ENCODE measurements at regions of chr9 and their contacts with region 1.

Region 1: GRCh38 chr9:104386425-104387069 is 117.5 kb upstream of the OR13F1 start:
- DNase-seq: peak; percentile 16
- ATAC-seq: peak; percentile 80
- H3K4me3 ChIP-seq: no peak overlapping the region
- H3K27ac ChIP-seq: no peak overlapping the region
- H3K4me1 ChIP-seq: no peaks in the 10 kb centered on the region
- H3K27me3 ChIP-seq: no peaks in the 10 kb centered on the region
- CTCF ChIP-seq: peak; percentile 69
- EP300 ChIP-seq: no peak
- POLR2A ChIP-seq: no peak
- RAD21 ChIP-seq: peak; percentile 31; the same call in 1 of the 2 replicates

Region 2: DNA sequence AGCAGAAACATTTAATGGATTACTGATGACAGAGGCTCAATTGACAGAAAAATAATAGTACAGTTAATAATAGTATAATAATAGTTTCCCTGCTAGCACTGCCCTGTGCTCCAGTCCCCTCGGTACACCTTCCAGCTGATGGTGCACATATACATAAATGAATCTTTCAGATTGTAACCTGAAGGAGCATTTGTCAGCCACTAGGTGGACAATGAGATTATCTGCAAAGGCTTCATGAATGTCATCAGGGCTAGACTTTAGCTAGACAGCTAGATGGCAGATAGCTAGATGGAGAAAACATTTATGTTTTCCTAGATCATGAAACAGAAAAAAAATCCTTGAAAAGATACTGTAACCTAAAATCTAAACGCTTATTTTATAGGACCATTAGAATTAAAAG is 596.9 kb before region 1 on chr9:
- CTCF ChIA-PET with region 1: no interaction called
- POLR2A ChIA-PET with region 1: no interaction called
- in situ Hi-C with region 1: no loop called
- intact Hi-C with region 1: loop called (anchors 1 kb)
- DNase-seq: peak; percentile 16
- ATAC-seq: peak; percentile 82
- H3K4me3 ChIP-seq: no peak overlapping the region
- H3K27ac ChIP-seq: no peak overlapping the region
- H3K4me1 ChIP-seq: no peaks in the 10 kb centered on the region
- H3K27me3 ChIP-seq: no peaks in the 10 kb centered on the region
- CTCF ChIP-seq: peak; percentile 31; the same call in 1 of the 2 replicates
- EP300 ChIP-seq: no peak
- POLR2A ChIP-seq: no peak
- RAD21 ChIP-seq: no peak

Region 3: DNA sequence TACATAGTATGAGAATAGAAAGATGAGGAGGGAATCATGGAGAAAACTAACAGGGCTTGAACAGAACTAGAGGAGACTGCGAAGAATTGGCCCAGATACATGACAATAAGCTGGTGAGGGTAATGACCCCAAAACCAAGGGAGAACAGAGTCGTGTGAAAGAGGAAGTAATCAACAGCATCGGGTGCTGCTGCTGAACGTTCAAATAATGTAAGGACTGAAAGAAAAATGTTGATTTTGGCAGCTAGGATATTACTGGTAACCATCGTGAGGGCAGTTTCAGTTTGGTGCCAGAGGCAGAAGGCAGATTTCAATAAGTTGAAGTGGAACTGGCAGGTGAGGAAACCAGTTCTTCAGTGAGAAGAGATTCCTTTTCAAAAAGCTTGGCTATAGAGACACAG is 359.3 kb before region 1 on chr9:
- CTCF ChIA-PET with region 1: no interaction called
- POLR2A ChIA-PET with region 1: no interaction called
- in situ Hi-C with region 1: no loop called
- intact Hi-C with region 1: loop called (anchors 2 kb)
- DNase-seq: no peak
- ATAC-seq: no peak
- H3K4me3 ChIP-seq: no peak overlapping the region
- H3K27ac ChIP-seq: no peak overlapping the region
- H3K4me1 ChIP-seq: no peaks in the 10 kb centered on the region
- H3K27me3 ChIP-seq: no peaks in the 10 kb centered on the region
- CTCF ChIP-seq: no peak
- EP300 ChIP-seq: no peak
- POLR2A ChIP-seq: no peak
- RAD21 ChIP-seq: no peak

Region 4: GRCh38 chr9:104177003-104177611 is 209.4 kb before region 1 on chr9:
- CTCF ChIA-PET with region 1: interaction called, 17 read pairs
- POLR2A ChIA-PET with region 1: no interaction called
- in situ Hi-C with region 1: loop called (anchors 5 kb)
- intact Hi-C with region 1: loop called (anchors 1 kb)
- DNase-seq: peak; percentile 9
- ATAC-seq: peak; percentile 63; the same call in 2 of the 3 replicates
- H3K4me3 ChIP-seq: no peak overlapping the region
- H3K27ac ChIP-seq: no peak overlapping the region
- H3K4me1 ChIP-seq: no peaks in the 10 kb centered on the region
- H3K27me3 ChIP-seq: no peaks in the 10 kb centered on the region
- CTCF ChIP-seq: peak; percentile 52
- EP300 ChIP-seq: no peak
- POLR2A ChIP-seq: no peak
- RAD21 ChIP-seq: no peak

Region 5: GRCh38 chr9:104256031-104256709 is 130.4 kb before region 1 on chr9:
- CTCF ChIA-PET with region 1: no interaction called
- POLR2A ChIA-PET with region 1: no interaction called
- in situ Hi-C with region 1: no loop called
- intact Hi-C with region 1: no loop called
- DNase-seq: no peak
- ATAC-seq: no peak
- H3K4me3 ChIP-seq: no peak overlapping the region
- H3K27ac ChIP-seq: no peak overlapping the region
- H3K4me1 ChIP-seq: no peaks in the 10 kb centered on the region
- H3K27me3 ChIP-seq: no peaks in the 10 kb centered on the region
- CTCF ChIP-seq: no peak
- EP300 ChIP-seq: no peak
- POLR2A ChIP-seq: no peak
- RAD21 ChIP-seq: no peak